OCI-LY7 (cell line): ENCODE measurements at regions of chr11 and their contacts with region 1.

Region 1: DNA sequence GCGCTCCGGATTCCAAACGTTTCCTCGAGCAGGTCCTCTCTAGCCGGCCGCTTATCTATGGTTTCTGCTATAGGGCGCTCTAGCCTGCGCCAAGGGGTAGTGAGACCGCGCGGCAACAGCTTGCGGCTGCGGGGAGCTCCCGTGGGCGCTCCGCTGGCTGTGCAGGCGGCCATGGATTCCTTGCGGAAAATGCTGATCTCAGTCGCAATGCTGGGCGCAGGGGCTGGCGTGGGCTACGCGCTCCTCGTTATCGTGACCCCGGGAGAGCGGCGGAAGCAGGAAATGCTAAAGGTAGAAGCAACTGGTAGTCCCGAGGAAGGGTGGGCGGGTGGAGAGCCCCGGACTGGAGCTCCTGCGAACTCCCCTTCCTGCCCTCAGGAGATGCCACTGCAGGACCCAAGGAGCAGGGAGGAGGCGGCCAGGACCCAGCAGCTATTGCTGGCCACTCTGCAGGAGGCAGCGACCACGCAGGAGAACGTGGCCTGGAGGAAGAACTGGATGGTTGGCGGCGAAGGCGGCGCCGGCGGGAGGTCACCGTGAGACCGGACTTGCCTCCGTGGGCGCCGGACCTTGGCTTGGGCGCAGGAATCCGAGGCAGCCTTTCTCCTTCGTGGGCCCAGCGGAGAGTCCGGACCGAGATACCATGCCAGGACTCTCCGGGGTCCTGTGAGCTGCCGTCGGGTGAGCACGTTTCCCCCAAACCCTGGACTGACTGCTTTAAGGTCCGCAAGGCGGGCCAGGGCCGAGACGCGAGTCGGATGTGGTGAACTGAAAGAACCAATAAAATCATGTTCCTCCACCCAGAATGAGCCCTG is at the starts of genes LBHD1 and UQCC3:
- DNase-seq: peak; percentile 86
- H3K4me3 ChIP-seq: peak within 1 kb of the TSS; percentile 81
- H3K27ac ChIP-seq: peak within 1 kb of the TSS; percentile 73
- H3K4me1 ChIP-seq: peaks cover 56% of the 10 kb centered on the region
- CTCF ChIP-seq: no peak
- total RNA-seq, gene LBHD1: 7.1 and 9.3 TPM in 2 replicates
- total RNA-seq, gene UQCC3: 40.0 and 40.3 TPM in 2 replicates

Region 2: DNA sequence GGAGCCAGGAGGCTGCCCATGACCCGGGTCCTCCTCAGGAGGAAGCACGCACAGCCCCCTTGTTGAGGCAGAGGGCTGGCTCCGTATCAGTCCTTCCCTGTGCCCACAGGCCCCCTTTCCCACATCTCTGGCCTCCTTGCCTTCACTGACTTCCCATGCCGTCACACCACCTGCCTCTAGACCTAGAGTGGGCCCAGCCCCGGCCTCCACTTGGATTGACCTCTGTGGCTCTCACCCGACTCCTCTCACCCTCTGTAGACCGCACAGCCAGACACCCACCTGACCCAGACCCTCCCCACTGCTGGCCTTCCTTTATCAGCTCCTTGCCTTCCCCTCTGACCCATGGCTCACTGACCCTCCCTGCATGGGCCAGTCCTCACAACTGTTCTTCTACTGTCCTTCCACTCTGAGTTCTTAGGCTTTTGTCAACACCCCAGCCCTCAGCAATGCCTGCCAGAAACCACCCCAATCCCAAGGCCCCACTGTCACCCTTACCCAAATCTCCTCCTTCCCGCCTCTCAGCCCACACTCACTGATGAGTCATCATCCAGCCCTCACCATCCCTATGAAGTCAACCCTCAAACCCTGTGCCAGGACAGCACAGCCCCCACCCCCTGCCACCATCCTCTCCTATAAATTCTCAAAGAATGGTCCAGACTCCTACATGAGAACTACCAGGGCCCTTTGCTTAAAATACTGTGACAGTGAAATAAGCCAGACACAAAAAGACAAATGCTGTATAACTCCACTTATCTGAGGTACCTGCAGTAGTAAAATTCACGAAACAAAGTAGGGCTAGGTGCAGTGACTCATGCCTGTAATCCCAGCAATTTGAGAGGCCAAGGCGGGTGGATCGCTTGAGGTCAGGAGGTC is 199.5 kb before region 1 on chr11:
- CTCF ChIA-PET with region 1: no interaction called
- POLR2A ChIA-PET with region 1: no interaction called
- intact Hi-C with region 1: no loop called
- DNase-seq: no peak
- H3K4me3 ChIP-seq: no peak overlapping the region
- H3K27ac ChIP-seq: no peak overlapping the region
- H3K4me1 ChIP-seq: no peaks in the 10 kb centered on the region
- CTCF ChIP-seq: no peak

Region 3: GRCh38 chr11:62556108-62556871 is 115.5 kb before region 1 on chr11:
- CTCF ChIA-PET with region 1: no interaction called
- POLR2A ChIA-PET with region 1: no interaction called
- intact Hi-C with region 1: no loop called
- DNase-seq: peak; percentile 62
- H3K4me3 ChIP-seq: no peak overlapping the region
- H3K27ac ChIP-seq: peak overlapping the region; percentile 48
- H3K4me1 ChIP-seq: peaks cover 42% of the 10 kb centered on the region
- CTCF ChIP-seq: no peak

Region 4: GRCh38 chr11:62771144-62772021 is 99.6 kb after region 1 on chr11 and contains the start of gene TAF6L:
- CTCF ChIA-PET with region 1: no interaction called
- POLR2A ChIA-PET with region 1: interaction called, 13 read pairs
- intact Hi-C with region 1: loop called (anchors 5 kb)
- DNase-seq: peak; percentile 94
- H3K4me3 ChIP-seq: peak within 1 kb of the TSS; percentile 77
- H3K27ac ChIP-seq: peak within 1 kb of the TSS; percentile 71
- H3K4me1 ChIP-seq: peaks cover 32% of the 10 kb centered on the region
- CTCF ChIP-seq: no peak
- total RNA-seq, gene TAF6L: 23.7 and 26.1 TPM in 2 replicates